Activated CD4-positive, alpha-beta T cell treated with anti-CD3 and anti-CD28 coated beads for 36 hours (primary cell): ENCODE measurements at regions of chr5 and their contacts with region 1.

Region 1: GRCh38 chr5:55691265-55692105 is 20.6 kb downstream of the SLC38A9 start:
- DNase-seq: no peak
- ATAC-seq: peak; percentile 36
- H3K4me3 Mint-ChIP-seq: no peak overlapping the region
- H3K27ac Mint-ChIP-seq: no peak overlapping the region
- H3K4me1 Mint-ChIP-seq: no peaks in the 10 kb centered on the region
- H3K27me3 Mint-ChIP-seq: no peaks in the 10 kb centered on the region

Region 2: GRCh38 chr5:55187370-55187769 is 504.1 kb before region 1 on chr5:
- CTCF ChIA-PET with region 1: no interaction called
- POLR2A ChIA-PET with region 1: no interaction called
- intact Hi-C with region 1: loop called in 1 of 2 experiments (anchors 5 kb)
- DNase-seq: no peak
- ATAC-seq: no peak
- H3K4me3 Mint-ChIP-seq: no peak overlapping the region
- H3K27ac Mint-ChIP-seq: no peak overlapping the region
- H3K4me1 Mint-ChIP-seq: no peaks in the 10 kb centered on the region
- H3K27me3 Mint-ChIP-seq: peaks cover 49% of the 10 kb centered on the region

Region 3: DNA sequence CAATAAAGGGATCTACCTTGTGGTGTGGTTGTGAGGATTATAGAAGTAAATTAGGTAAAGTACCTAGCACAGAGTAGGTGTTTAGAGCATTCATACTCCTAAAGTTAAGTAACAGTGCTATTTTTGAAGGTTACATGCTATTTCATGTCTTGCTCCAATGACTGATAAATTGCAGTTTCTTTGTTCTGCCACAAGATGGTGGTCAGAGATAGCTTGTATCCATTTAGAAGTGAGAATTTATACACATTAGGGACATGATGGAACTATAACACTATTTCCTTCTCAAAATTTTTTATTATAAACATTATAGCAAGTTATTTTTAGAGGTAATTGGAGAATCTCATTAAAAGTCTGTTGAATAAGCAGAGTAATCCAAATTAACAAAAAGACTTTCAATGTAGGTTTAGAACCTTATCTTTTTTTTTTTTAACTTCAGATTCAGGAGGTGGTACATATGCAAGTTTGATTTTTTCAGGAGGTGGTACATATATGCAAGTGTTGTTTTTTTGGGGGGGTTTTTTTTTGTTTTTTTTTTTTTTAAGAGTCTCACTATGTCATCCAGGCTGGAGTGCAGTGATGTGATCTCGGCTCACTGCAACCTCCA is 366.6 kb before region 1 on chr5:
- CTCF ChIA-PET with region 1: interaction called, 6 read pairs
- POLR2A ChIA-PET with region 1: no interaction called
- intact Hi-C with region 1: loop called in 1 of 2 experiments (anchors 1 kb)
- DNase-seq: no peak
- ATAC-seq: peak; percentile 44
- H3K4me3 Mint-ChIP-seq: no peak overlapping the region
- H3K27ac Mint-ChIP-seq: peak overlapping the region; percentile 67
- H3K4me1 Mint-ChIP-seq: peaks cover 19% of the 10 kb centered on the region
- H3K27me3 Mint-ChIP-seq: no peaks in the 10 kb centered on the region

Region 4: GRCh38 chr5:55407059-55407684 is 284.3 kb before region 1 on chr5:
- CTCF ChIA-PET with region 1: interaction called, 9 read pairs
- POLR2A ChIA-PET with region 1: no interaction called
- intact Hi-C with region 1: loop called (anchors 1 kb)
- DNase-seq: peak; percentile 20
- ATAC-seq: peak; percentile 47
- H3K4me3 Mint-ChIP-seq: no peak overlapping the region
- H3K27ac Mint-ChIP-seq: no peak overlapping the region
- H3K4me1 Mint-ChIP-seq: peaks cover 7% of the 10 kb centered on the region
- H3K27me3 Mint-ChIP-seq: no peaks in the 10 kb centered on the region

Region 5: DNA sequence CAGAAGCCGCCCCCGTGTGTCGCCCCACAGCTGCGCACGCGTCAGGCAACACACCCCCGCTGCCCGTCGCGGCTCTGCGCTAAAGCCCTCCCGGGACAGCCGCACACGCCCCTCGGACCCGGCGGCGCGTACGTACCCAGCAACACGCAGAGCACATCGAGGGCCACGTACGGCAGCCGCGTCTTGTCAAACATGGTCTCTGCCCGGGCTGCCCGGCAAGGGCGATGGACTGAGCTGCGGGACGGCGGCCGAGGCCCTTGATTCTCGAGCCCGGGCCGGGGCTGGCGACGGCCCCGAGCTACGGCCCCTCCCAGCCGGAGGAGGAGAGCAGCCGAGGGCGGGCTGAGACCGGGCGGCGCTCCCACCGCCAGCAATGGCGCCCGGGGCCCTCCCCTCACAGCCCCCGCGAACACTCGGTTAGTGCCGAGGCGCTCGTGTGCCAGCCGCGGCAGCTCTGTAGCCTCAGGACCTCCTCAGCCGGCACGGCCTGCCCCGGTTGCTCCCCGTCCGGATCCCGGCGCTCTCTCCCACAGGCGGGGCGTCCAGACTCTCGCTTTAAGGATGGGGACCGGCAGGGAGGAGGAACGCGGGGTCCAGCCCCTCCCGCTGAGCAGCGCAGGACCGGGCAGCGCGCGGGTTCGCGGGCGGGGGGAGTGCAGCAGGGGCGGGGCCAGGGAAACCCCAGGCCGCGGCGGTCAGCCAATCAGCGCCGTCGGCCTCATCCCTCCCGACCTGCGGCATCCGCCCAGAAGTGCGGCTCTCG is 156.9 kb before region 1 on chr5 and contains the start of gene PLPP1:
- CTCF ChIA-PET with region 1: no interaction called
- POLR2A ChIA-PET with region 1: no interaction called
- intact Hi-C with region 1: loop called (anchors 5 to 10 kb)
- DNase-seq: peak; percentile 91
- ATAC-seq: peak; percentile 89
- H3K4me3 Mint-ChIP-seq: peak within 1 kb of the TSS; percentile 79
- H3K27ac Mint-ChIP-seq: peak within 1 kb of the TSS; percentile 88
- H3K4me1 Mint-ChIP-seq: peaks cover 27% of the 10 kb centered on the region
- H3K27me3 Mint-ChIP-seq: no peaks in the 10 kb centered on the region
- total RNA-seq, gene PLPP1: 7.9 to 8.2 TPM

Region 6: DNA sequence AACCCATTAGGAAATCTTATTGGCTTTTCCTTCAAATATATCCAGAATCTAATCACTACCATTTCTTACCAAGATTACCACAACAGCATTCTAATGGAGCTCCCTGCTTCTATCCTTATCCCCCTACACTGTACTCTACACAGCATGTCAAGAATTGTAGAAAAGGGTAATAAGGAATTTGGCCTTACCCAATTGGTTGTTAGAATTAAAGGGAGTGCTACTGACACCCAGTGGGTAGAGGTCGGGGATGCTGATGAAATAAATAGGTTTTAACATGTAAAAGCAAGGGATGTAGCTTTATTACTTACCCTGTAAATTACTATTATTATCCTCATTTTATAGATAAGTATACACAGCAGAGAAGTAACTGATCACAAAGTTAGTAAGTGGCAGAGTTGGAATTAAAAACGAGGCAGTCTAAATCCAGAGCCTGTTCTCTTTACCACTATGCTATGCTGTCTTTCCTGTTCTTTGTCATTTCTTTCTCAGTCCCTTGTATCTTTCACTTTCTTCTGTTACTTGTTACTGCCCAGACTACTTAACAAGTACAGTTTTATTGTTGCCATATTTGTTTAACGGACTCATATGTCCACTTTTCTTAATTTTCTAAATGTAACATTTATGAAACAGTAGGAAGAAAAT is 10.1 kb after region 1 on chr5:
- CTCF ChIA-PET with region 1: interaction called, 20 read pairs
- POLR2A ChIA-PET with region 1: no interaction called
- intact Hi-C with region 1: no loop called
- DNase-seq: no peak
- ATAC-seq: no peak
- H3K4me3 Mint-ChIP-seq: no peak overlapping the region
- H3K27ac Mint-ChIP-seq: no peak overlapping the region
- H3K4me1 Mint-ChIP-seq: peaks cover 16% of the 10 kb centered on the region
- H3K27me3 Mint-ChIP-seq: no peaks in the 10 kb centered on the region